WTC11 (cell line): ENCODE measurements at regions of chr1 and their contacts with region 1.

Region 1: GRCh38 chr1:36149237-36149972 is at the start of gene TRAPPC3:
- DNase-seq: peak; percentile 100
- ATAC-seq: peak; percentile 92
- H3K4me3 Mint-ChIP-seq: peak within 1 kb of the TSS; percentile 90
- H3K27ac Mint-ChIP-seq: peak within 1 kb of the TSS; percentile 97
- H3K4me1 Mint-ChIP-seq: peaks cover 33% of the 10 kb centered on the region
- H3K27me3 Mint-ChIP-seq: peaks cover 27% of the 10 kb centered on the region
- CTCF ChIP-seq: peak; percentile 37; the same call in 1 of the 2 replicates
- total RNA-seq, gene TRAPPC3: 48.9 to 52.5 TPM (median 52.0 TPM) in 3 replicates

Region 2: DNA sequence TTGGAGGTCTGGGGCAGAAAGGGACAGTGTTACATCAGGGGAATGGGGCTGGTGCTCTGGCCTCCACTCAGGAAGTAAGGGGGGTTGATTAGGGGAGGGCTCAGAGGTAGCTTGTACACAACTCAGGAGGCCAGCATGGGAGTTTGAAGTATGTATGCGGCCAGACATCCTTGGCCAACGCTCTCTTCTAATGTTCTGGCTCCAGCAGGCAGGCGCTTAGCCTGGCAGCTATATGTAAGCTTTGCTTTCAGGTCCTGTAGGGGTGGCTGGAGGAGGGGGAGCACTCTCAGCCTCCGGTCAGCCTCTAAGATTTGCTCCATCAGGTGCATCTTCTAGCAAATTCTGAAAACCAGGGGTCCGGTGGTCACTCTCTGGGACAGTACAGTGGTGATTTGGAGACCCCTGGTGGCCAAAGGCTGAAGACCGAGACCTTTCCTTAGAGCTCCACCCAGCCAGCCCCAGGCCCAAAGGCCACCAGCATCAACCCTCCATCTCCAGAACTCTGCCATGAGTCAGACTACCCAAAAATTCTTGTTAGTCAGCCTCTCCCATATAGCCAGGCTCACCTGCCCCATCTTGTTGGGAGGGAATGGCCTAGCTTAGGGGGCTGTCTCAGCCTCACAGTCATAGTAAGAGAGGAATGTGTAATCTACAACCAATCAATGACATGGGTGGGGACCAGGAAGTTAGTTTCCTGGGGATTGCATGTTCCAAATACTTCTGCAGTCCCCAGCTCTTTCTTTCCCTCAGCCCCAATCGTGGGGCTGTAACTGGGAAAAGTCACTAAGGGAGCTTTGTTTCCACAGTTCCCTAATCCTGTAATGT is 14.7 kb before region 1 on chr1:
- CTCF ChIA-PET with region 1: interaction called, 57 read pairs
- POLR2A ChIA-PET with region 1: interaction called, 3 read pairs
- DNase-seq: peak; percentile 81
- ATAC-seq: peak; percentile 95
- H3K4me3 Mint-ChIP-seq: no peak overlapping the region
- H3K27ac Mint-ChIP-seq: peak overlapping the region; percentile 26
- H3K4me1 Mint-ChIP-seq: peaks cover 6% of the 10 kb centered on the region
- H3K27me3 Mint-ChIP-seq: no peaks in the 10 kb centered on the region
- CTCF ChIP-seq: peak; percentile 80

Region 3: DNA sequence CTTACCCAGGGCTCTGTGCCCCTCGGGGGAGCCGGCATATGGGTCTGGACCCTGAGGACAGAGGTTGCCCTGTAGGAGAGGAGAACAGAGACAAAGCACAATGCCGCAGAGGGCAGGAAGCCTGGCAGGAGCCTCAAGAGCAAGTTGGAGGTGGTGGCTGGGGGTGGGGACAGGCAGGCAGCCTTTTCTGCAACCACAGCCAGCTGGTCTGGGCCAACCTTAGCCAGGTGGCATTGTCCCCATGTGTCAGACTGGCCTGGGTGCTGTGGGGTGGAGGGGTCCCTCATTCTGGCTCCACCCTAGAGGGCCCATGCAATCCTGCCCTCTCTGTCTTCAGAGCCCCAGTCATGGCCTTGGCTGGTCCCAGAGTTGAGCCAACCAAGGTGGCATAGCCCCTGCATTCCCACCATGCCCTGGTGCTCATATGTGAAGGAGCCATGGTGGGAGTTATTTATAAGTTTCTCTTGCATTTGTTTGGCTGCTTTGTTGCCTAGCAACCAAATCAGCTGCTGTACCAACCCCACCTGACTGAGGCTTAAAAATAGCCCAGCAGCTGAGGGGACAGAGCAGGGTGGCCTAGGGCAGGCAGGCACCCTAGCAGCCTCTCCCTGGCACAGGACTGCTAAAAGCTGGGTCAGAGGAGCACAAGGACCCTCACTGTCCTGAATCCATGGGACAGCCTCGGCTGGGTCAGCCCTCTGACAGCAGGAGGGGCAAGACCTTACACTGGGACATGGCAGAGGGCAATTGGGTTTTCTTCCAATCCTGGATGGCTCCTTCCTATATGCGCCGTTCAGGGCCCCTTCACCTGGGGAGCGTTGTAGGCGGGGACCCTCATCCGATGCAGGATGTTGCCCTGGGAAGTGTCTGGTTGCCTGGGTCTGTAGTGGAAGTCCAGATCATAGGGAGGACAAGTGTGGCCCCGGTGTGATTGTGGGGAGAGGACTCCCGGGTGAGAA is 26.0 kb after region 1 on chr1:
- CTCF ChIA-PET with region 1: interaction called, 17 read pairs
- POLR2A ChIA-PET with region 1: interaction called, 20 read pairs
- DNase-seq: no peak
- ATAC-seq: no peak
- H3K4me3 Mint-ChIP-seq: peak overlapping the region; percentile 41
- H3K27ac Mint-ChIP-seq: no peak overlapping the region; the same call in 1 of the 2 replicates
- H3K4me1 Mint-ChIP-seq: peaks cover 22% of the 10 kb centered on the region
- H3K27me3 Mint-ChIP-seq: no peaks in the 10 kb centered on the region
- CTCF ChIP-seq: no peak

Region 4: DNA sequence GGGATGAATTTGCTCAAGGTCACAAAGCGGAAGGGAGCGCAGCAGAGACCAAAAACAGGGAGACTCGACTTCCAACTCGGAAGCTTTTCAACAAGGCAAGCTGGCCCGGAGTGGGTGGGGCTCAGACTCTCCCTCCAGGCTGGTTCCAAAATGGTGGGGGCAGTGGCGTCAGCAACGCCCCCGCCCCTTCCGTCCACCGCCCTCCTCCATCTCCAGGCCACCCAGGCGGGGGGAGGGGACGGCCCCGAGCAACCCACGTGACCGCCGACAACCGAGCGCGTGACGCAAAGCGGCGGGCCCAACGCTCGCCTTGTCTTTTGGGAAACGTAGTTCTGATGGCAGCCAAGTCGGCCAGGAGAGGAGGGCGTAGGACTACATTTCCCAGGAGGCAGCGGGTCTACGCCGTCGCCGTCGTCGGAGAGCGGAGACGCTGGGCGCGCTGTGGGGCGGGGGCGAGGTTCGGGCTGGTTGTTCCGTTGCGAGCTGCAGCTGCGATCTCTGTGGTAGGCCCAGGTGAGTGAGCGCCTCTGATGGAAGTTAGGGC is 74.7 kb after region 1 on chr1 and contains the start of gene THRAP3:
- CTCF ChIA-PET with region 1: interaction called, 27 read pairs
- POLR2A ChIA-PET with region 1: interaction called, 8 read pairs
- DNase-seq: peak; percentile 100
- ATAC-seq: peak; percentile 95
- H3K4me3 Mint-ChIP-seq: peak within 1 kb of the TSS; percentile 97
- H3K27ac Mint-ChIP-seq: peak within 1 kb of the TSS; percentile 100
- H3K4me1 Mint-ChIP-seq: peaks cover 16% of the 10 kb centered on the region
- H3K27me3 Mint-ChIP-seq: no peaks in the 10 kb centered on the region
- CTCF ChIP-seq: no peak
- total RNA-seq, gene THRAP3: 150 to 160 TPM (median 153 TPM) in 3 replicates

Region 5: GRCh38 chr1:36306902-36307456 is 157.6 kb after region 1 on chr1:
- CTCF ChIA-PET with region 1: interaction called, 14 read pairs
- POLR2A ChIA-PET with region 1: interaction called, 9 read pairs
- DNase-seq: peak; percentile 98
- ATAC-seq: peak; percentile 95
- H3K4me3 Mint-ChIP-seq: peak overlapping the region; percentile 99
- H3K27ac Mint-ChIP-seq: peak overlapping the region; percentile 94; the same call in 1 of the 2 replicates
- H3K4me1 Mint-ChIP-seq: peaks cover 17% of the 10 kb centered on the region
- H3K27me3 Mint-ChIP-seq: no peaks in the 10 kb centered on the region
- CTCF ChIP-seq: no peak